Activated CD4-positive, alpha-beta T cell treated with anti-CD3 and anti-CD28 coated beads for 36 hours (primary cell): ENCODE measurements at regions of chr2 and their contacts with region 1.

Region 1: GRCh38 chr2:24971536-24972314 is at the start of gene DNAJC27:
- DNase-seq: peak; percentile 99
- ATAC-seq: peak; percentile 91
- H3K4me3 Mint-ChIP-seq: peak within 1 kb of the TSS; percentile 86
- H3K27ac Mint-ChIP-seq: peak within 1 kb of the TSS; percentile 99
- H3K4me1 Mint-ChIP-seq: peaks cover 17% of the 10 kb centered on the region
- H3K27me3 Mint-ChIP-seq: no peaks in the 10 kb centered on the region
- total RNA-seq, gene DNAJC27: 5.9 to 6.6 TPM

Region 2: DNA sequence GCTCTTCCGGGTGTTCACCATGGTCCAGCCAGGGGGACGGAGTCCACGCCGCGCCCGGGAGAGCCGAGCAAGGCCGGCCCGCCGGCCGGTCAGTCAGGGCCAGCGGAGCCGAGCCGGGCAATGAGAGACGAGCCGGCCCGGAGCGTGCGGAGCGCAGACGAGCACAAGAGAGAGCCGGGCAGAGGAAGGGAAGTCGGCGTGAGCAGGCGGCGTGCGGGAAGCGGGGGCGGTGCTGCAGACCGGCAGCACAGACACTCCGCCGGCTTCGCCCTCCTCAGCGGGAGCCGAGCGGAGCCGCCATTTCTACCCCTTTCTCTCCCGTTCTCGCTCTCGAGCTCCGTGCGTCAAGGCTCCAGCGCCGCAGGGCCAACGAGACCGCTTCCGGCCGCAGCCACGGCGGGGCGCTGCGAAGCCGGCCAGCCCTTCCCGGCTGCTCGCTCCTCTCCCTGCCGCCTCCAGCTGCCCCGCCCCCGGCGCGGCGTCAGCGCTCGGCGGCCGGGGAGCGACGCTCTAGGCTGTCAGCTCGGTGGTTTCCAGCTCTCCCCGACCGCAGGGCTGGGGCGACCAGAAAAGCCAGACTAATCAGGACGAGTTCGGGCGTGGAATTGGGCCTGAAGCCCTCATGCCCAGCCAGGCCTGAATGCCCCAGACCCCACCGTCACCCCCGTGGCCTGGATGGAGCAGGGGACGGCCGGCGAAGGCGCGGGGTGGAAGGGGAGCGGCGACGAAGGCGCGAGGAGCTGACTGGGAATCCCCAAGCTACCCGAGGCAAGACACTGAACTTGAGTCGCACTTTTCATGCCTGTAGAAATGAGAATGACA is 1044.8 kb before region 1 on chr2 and contains the start of gene ATAD2B:
- CTCF ChIA-PET with region 1: no interaction called
- POLR2A ChIA-PET with region 1: no interaction called
- intact Hi-C with region 1: loop called in 1 of 2 experiments (anchors 2 kb)
- DNase-seq: peak; percentile 96
- ATAC-seq: peak; percentile 80
- H3K4me3 Mint-ChIP-seq: peak within 1 kb of the TSS; percentile 80
- H3K27ac Mint-ChIP-seq: peak within 1 kb of the TSS; percentile 100
- H3K4me1 Mint-ChIP-seq: peaks cover 41% of the 10 kb centered on the region
- H3K27me3 Mint-ChIP-seq: no peaks in the 10 kb centered on the region
- total RNA-seq, gene ATAD2B: 10.9 to 12.7 TPM

Region 3: GRCh38 chr2:24577481-24577880 is 394.2 kb before region 1 on chr2:
- CTCF ChIA-PET with region 1: no interaction called
- POLR2A ChIA-PET with region 1: no interaction called
- intact Hi-C with region 1: loop called in 1 of 2 experiments (anchors 1 kb)
- DNase-seq: no peak
- ATAC-seq: peak; percentile 76
- H3K4me3 Mint-ChIP-seq: peak overlapping the region; percentile 3
- H3K27ac Mint-ChIP-seq: peak overlapping the region; percentile 79
- H3K4me1 Mint-ChIP-seq: peaks cover 76% of the 10 kb centered on the region
- H3K27me3 Mint-ChIP-seq: no peaks in the 10 kb centered on the region

Region 4: GRCh38 chr2:24850944-24851343 is 120.8 kb before region 1 on chr2:
- CTCF ChIA-PET with region 1: no interaction called
- POLR2A ChIA-PET with region 1: no interaction called
- intact Hi-C with region 1: no loop called
- DNase-seq: no peak
- ATAC-seq: no peak
- H3K4me3 Mint-ChIP-seq: no peak overlapping the region
- H3K27ac Mint-ChIP-seq: no peak overlapping the region
- H3K4me1 Mint-ChIP-seq: no peaks in the 10 kb centered on the region
- H3K27me3 Mint-ChIP-seq: no peaks in the 10 kb centered on the region

Region 5: GRCh38 chr2:24993406-24994145 is 21.9 kb after region 1 on chr2:
- CTCF ChIA-PET with region 1: interaction called, 11 read pairs
- POLR2A ChIA-PET with region 1: no interaction called
- intact Hi-C with region 1: no loop called
- DNase-seq: no peak
- ATAC-seq: no peak
- H3K4me3 Mint-ChIP-seq: no peak overlapping the region
- H3K27ac Mint-ChIP-seq: no peak overlapping the region
- H3K4me1 Mint-ChIP-seq: no peaks in the 10 kb centered on the region
- H3K27me3 Mint-ChIP-seq: peaks cover 3% of the 10 kb centered on the region

Region 6: DNA sequence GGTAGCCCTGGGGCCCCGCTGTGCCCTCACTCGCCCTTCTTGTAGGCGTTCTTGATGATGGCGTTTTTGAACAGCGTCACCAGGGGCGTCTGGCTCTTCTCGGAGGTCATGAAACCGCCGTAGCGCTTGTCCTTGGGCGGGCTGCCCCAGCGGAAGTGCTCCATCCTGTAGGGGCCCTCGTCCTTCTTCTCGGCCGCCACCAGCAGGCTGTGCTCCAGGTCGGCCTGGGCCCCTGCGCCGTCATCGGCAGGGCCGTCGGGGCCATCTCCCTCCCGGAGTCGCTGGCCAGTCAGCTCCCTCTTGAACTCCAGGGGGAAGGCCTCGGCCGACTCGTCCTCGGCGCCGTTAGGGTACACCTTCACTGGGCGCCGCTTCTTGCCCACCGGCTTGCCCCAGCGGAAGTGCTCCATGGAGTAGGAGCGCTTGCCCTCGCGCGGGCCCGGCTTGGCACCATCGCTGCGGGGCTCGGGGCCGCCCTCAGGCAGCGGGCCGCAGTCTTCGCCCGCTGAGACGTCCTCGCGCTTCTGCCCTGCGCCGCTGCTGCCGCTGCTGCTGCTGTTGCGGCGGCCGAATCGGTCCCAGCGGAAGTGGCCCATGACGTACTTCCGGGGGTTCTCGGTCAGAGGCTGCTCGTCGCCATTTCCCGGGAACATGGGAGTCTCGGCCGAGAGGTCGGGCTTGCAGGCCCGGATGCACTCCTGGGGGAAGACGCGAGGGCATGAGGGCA is 189.5 kb after region 1 on chr2:
- CTCF ChIA-PET with region 1: interaction called, 5 read pairs
- POLR2A ChIA-PET with region 1: no interaction called
- intact Hi-C with region 1: loop called in 1 of 2 experiments (anchors 1 kb)
- DNase-seq: peak; percentile 91
- ATAC-seq: peak; percentile 76
- H3K4me3 Mint-ChIP-seq: peak overlapping the region; percentile 76
- H3K27ac Mint-ChIP-seq: peak overlapping the region; percentile 84
- H3K4me1 Mint-ChIP-seq: peaks cover 23% of the 10 kb centered on the region
- H3K27me3 Mint-ChIP-seq: no peaks in the 10 kb centered on the region

Region 7: GRCh38 chr2:25362049-25362433 is 390.3 kb after region 1 on chr2:
- CTCF ChIA-PET with region 1: no interaction called
- POLR2A ChIA-PET with region 1: no interaction called
- intact Hi-C with region 1: loop called in 1 of 2 experiments (anchors 2 kb)
- DNase-seq: peak; percentile 97
- ATAC-seq: peak; percentile 97
- H3K4me3 Mint-ChIP-seq: peak overlapping the region; percentile 79
- H3K27ac Mint-ChIP-seq: peak overlapping the region; percentile 96
- H3K4me1 Mint-ChIP-seq: peaks cover 14% of the 10 kb centered on the region
- H3K27me3 Mint-ChIP-seq: no peaks in the 10 kb centered on the region